CD8-positive, alpha-beta T cell (primary cell): ENCODE measurements at regions of chr5 and their contacts with region 1.

Region 1: DNA sequence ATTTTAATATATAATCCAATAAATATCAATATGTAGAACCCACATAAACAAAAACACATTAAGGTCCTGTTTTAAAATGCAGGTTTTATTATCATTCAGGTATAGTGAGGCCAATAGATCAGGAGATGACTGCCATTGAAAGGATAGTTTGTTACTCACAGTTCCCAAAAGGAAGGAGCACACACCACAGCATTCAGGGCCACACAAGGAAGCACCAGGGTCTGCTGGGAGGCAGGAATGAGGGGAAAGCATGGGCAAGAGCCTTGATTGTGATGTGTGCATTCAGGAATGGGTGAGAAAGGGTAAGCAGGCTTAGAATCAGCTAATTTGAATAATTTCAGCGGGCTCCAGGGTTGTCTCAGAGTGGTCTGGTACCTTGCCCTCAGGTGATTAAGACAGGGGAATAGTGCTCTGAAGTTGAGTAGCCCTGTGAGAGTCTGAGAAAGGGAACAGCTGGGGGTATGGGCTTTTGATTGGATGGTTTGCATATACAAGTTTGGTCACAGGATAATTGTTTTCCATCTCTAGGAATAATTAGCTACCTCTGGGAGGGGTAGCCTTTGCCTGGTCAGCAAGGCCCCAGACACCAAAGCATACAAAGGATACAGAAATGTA is 19.8 kb upstream of the OTULIN start:
- DNase-seq: no peak
- ATAC-seq: no peak
- H3K4me3 ChIP-seq: no peak overlapping the region
- H3K4me3 Mint-ChIP-seq: no peak overlapping the region
- H3K27ac ChIP-seq: no peak overlapping the region
- H3K27ac Mint-ChIP-seq: no peak overlapping the region
- H3K4me1 ChIP-seq: peaks cover 4% of the 10 kb centered on the region
- H3K4me1 Mint-ChIP-seq: no peaks in the 10 kb centered on the region
- H3K27me3 ChIP-seq: no peaks in the 10 kb centered on the region
- H3K27me3 Mint-ChIP-seq: peaks cover 11% of the 10 kb centered on the region
- CTCF ChIP-seq: no peak

Region 2: DNA sequence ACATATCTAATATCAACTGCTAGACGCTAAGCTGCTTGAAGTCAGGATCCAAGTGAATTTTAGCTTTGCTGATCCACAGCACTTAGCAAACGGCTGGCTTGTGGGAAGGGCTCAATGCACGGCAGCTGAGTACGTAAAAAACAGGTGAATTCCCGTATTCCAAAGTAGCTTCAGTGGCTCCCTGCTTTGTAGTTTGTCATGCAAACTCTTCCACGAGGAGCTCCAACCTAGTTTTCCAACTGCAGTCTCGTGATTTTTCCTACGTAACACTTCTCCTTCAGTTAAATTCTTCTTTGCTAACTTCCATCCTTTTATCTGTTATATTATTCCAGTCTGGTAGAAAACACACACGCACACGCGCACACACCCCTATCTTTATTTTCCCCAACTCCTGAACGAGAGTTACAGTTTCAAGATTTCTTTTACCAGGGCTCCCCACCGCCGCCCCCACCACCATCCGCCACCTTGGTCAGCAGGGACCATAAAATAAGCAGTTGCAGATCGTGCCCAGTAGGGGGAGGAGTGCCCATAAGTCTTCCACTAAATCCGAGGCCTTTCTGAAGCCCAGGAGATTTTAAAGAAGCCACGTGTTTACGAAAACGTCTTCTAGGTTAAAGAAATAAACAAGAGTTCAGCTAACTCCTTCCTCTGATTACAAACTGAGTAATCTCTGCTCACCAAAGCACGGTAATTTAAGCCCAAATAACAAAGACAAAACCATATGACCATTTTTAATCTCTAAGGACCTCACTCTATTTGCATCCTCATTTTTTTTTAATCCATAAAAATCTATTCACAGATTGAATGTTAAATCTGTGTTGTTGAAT is 536.3 kb before region 1 on chr5:
- CTCF ChIA-PET with region 1: no interaction called
- POLR2A ChIA-PET with region 1: no interaction called
- intact Hi-C with region 1: loop called in 1 of 2 experiments (anchors 2 kb)
- DNase-seq: peak in 4 of 9 experiments; percentile 2 to 68 (median 37)
- ATAC-seq: peak; percentile 52
- H3K4me3 ChIP-seq: no peak overlapping the region
- H3K4me3 Mint-ChIP-seq: peak overlapping the region; percentile 29
- H3K27ac ChIP-seq: no peak overlapping the region
- H3K27ac Mint-ChIP-seq: no peak overlapping the region
- H3K4me1 ChIP-seq: no peaks in the 10 kb centered on the region
- H3K4me1 Mint-ChIP-seq: peaks cover 3% of the 10 kb centered on the region
- H3K27me3 ChIP-seq: no peaks in the 10 kb centered on the region
- H3K27me3 Mint-ChIP-seq: peaks cover 15% of the 10 kb centered on the region
- CTCF ChIP-seq: peak; percentile 49

Region 3: DNA sequence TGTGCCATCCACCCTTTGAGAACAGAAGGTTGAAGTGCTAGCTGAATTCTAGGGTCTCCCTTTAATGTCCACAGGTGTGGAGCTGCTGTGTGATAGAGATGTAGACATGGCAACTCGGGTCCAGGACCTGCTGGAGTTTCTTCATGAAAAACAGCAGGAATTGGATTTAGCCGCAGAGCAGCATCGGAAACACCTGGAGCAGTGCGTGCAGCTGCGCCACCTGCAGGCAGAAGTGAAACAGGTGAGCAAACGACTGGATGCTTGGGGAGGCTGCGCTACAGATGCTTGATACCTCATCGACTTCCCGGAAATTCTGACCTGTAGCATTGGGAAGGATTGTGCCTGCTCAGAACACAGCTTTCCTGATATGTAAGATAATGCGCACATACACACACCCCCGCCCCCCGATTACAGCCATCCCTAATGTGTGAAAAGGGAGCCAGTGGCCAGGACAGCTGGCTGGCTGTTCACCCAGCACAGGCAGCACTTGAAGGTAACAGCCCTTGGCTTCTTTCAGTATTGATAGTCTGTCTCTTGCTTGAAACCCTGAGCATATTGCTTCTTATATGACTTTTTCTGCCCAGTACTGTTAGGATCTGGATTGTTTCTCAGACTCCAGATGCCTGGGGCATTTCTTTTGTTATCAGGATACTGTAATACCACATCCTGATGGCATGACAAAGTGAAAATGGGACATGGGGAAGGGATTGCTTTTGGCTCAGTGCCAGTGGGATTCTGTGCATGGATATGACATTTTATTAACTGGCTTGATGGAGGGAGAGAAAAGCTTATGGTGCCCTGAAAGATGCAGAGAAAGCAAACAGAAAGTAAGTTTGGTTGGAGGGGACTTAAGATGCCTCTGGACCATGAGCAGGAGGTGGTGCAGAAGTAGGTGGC is 279.9 kb before region 1 on chr5:
- CTCF ChIA-PET with region 1: interaction called, 283 read pairs
- POLR2A ChIA-PET with region 1: no interaction called
- intact Hi-C with region 1: loop called (anchors 1 kb)
- DNase-seq: peak in 3 of 9 experiments; percentile 12 to 34 (median 25)
- ATAC-seq: no peak
- H3K4me3 ChIP-seq: no peak overlapping the region
- H3K4me3 Mint-ChIP-seq: no peak overlapping the region
- H3K27ac ChIP-seq: no peak overlapping the region
- H3K27ac Mint-ChIP-seq: no peak overlapping the region
- H3K4me1 ChIP-seq: peaks cover 33% of the 10 kb centered on the region
- H3K4me1 Mint-ChIP-seq: peaks cover 42% of the 10 kb centered on the region
- H3K27me3 ChIP-seq: no peaks in the 10 kb centered on the region
- H3K27me3 Mint-ChIP-seq: no peaks in the 10 kb centered on the region
- CTCF ChIP-seq: peak; percentile 6

Region 4: DNA sequence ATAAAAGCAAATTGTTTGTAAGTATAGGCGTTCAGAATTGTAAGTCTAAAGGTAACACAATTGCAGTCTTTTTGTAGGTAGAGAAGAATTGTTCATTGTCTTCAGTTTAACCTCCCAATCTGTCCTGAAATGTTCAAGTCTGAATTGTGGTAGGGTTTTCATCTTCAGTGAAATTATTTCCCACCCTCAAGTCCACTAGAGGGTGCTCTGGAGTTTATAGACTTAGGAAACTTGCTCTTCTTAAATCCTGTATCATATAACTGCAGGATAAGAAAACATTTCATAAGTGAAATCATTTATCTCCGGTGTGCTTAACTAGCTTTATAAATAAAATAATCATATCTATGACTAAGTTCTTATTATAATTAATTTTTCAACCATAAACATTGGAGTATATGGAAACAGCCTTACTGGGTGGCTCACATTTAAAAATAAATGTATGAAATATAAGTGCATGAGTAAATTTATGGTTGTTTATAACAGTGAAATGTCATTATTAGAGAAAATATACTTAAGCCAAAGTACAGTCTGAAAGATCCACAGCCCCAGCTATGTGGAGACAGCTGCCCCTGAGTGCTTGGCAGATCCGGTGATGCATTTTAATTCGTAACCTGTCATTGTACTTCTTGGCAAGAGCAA is 245.6 kb before region 1 on chr5:
- CTCF ChIA-PET with region 1: interaction called, 141 read pairs
- POLR2A ChIA-PET with region 1: interaction called, 3 read pairs
- intact Hi-C with region 1: loop called (anchors 1 kb)
- DNase-seq: peak in 3 of 9 experiments; percentile 37 to 72 (median 58)
- ATAC-seq: peak; percentile 65
- H3K4me3 ChIP-seq: no peak overlapping the region
- H3K4me3 Mint-ChIP-seq: no peak overlapping the region
- H3K27ac ChIP-seq: no peak overlapping the region
- H3K27ac Mint-ChIP-seq: no peak overlapping the region
- H3K4me1 ChIP-seq: no peaks in the 10 kb centered on the region
- H3K4me1 Mint-ChIP-seq: peaks cover 13% of the 10 kb centered on the region
- H3K27me3 ChIP-seq: no peaks in the 10 kb centered on the region
- H3K27me3 Mint-ChIP-seq: no peaks in the 10 kb centered on the region
- CTCF ChIP-seq: peak; percentile 71

Region 5: DNA sequence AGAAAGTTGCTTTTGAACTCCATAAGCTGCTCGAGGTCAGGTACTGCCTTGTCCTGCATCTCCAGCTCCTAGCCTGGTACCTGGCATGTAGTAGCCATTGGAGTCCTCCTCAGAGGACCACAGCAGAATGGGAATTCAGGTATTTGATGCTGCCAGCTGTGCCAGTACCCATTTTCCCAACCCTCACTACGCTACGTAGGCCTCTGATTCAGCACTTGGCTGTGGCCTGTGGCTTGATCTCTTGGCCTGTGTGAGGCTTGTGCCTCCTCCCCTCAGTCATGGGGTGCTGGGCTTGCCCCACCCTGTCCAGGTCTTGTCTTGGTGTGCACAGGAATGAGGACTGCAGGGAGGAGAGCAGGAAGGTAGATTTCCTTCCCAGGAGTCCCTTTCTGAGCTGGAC is 31.6 kb after region 1 on chr5:
- CTCF ChIA-PET with region 1: interaction called, 12 read pairs
- POLR2A ChIA-PET with region 1: interaction called, 4 read pairs
- intact Hi-C with region 1: no loop called
- DNase-seq: peak in 4 of 9 experiments; percentile 36 to 55 (median 43)
- ATAC-seq: peak; percentile 48
- H3K4me3 ChIP-seq: peak overlapping the region in 1 of 2 experiments; percentile 1
- H3K4me3 Mint-ChIP-seq: peak overlapping the region; percentile 63
- H3K27ac ChIP-seq: peak overlapping the region in 1 of 2 experiments; percentile 46
- H3K27ac Mint-ChIP-seq: peak overlapping the region; percentile 77
- H3K4me1 ChIP-seq: peaks cover 43% of the 10 kb centered on the region
- H3K4me1 Mint-ChIP-seq: peaks cover 63% of the 10 kb centered on the region
- H3K27me3 ChIP-seq: no peaks in the 10 kb centered on the region
- H3K27me3 Mint-ChIP-seq: no peaks in the 10 kb centered on the region
- CTCF ChIP-seq: no peak